Heart left ventricle (tissue), 16 donors: ENCODE measurements at regions of chr2 and their contacts with region 1.

Region 1: DNA sequence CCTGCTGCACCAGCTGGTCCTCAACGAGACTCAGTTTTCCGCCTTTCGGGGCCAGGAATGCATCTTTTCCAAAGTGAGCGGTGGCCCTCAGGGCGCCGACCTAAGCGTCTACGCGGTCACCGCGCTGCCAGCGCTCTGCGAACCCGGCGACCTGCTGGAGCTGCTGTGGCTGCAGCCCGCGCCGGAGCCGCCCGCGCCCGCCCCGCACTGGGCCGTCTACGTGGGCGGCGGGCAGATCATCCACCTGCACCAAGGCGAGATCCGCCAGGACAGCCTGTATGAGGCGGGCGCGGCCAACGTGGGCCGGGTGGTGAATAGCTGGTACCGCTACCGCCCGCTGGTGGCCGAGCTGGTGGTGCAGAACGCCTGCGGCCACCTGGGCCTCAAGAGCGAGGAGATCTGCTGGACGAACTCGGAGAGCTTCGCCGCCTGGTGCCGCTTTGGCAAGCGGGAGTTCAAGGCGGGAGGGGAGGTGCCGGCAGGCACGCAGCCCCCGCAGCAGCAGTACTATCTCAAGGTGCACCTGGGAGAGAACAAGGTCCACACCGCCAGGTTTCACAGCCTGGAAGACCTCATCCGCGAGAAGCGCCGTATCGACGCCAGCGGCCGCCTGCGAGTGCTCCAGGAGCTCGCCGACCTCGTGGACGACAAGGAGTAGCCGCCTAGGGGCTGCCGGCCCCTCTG is 1.8 kb downstream of the LRATD1 start:
- DNase-seq: peak; percentile 63 to 88 (median 79)
- ATAC-seq: peak; percentile 5 to 85 (median 74)
- H3K4me3 ChIP-seq: peak overlapping the region; percentile 24 to 64 (median 56)
- H3K27ac ChIP-seq: peak overlapping the region in 11 of 12 donors; percentile 43 to 90 (median 72)
- H3K4me1 ChIP-seq: peaks cover 0 to 40% (median 20%) of the 10 kb centered on the region in 12 donors
- H3K27me3 ChIP-seq: peaks cover 4 to 69% (median 28%) of the 10 kb centered on the region in 9 donors
- CTCF ChIP-seq: peak; percentile 35 to 80 (median 55)
- POLR2A ChIP-seq: no peak

Region 2: GRCh38 chr2:14428056-14428455 is 206.3 kb before region 1 on chr2:
- intact Hi-C with region 1: loop called in 1 of 10 experiments (anchors 2 kb)
- DNase-seq: peak in 2 of 5 donors; percentile 13 to 33
- ATAC-seq: peak in 3 of 4 donors; percentile 67 to 86 (median 82)
- H3K4me3 ChIP-seq: no peak overlapping the region
- H3K27ac ChIP-seq: no peak overlapping the region
- H3K4me1 ChIP-seq: no peaks in the 10 kb centered on the region
- H3K27me3 ChIP-seq: no peaks in the 10 kb centered on the region
- CTCF ChIP-seq: peak in 8 of 12 donors; percentile 9 to 41 (median 22)
- POLR2A ChIP-seq: no peak

Region 3: DNA sequence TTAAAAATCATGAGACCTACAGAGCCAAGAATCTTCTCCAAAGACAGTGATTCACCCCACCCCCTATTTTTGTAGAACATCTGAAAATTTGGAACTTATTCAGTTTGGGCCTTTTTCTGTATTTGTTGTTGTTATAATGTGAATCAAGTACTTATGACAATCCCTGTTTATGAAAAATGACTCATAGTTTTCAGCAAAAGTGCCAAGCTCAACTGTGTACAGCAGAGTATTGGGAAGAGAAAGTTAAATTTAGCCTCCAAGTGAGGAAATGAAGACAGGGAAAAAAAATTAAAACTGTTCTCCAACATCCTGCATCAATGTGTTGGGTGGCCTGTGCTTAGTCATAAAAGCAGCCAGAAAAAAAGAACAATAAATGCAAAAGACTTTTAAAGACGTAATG is 44.4 kb after region 1 on chr2:
- intact Hi-C with region 1: no loop called
- DNase-seq: no peak
- ATAC-seq: peak in 2 of 4 donors; percentile 22 to 43
- H3K4me3 ChIP-seq: no peak overlapping the region
- H3K27ac ChIP-seq: no peak overlapping the region
- H3K4me1 ChIP-seq: peaks cover 0 to 6% (median 0%) of the 10 kb centered on the region in 12 donors
- H3K27me3 ChIP-seq: no peaks in the 10 kb centered on the region
- CTCF ChIP-seq: no peak
- POLR2A ChIP-seq: no peak

Region 4: DNA sequence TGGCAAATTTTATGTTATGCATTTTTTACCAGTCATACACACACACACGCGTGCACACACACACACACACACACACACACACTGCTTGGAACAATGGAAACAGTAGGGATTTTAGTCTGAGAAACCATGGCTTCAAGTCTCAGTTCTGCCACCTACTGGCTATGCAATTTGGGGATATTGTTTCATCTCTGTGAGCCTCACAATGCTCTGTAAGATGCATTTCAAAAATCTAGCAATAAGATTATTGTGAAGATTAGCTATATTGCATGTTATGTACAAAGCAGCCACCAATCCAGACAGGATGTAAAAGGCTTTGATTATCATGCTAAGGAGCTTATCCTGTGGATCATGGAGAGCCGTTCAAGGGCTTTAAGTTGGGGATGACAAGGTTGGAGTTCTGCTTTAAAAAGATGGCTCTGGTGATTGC is 525.4 kb after region 1 on chr2:
- intact Hi-C with region 1: loop called in 1 of 10 experiments (anchors 10 kb)
- DNase-seq: no peak
- ATAC-seq: peak in 1 of 4 donors; percentile 31
- H3K4me3 ChIP-seq: no peak overlapping the region
- H3K27ac ChIP-seq: no peak overlapping the region
- H3K4me1 ChIP-seq: no peaks in the 10 kb centered on the region
- H3K27me3 ChIP-seq: no peaks in the 10 kb centered on the region
- CTCF ChIP-seq: peak in 11 of 12 donors; percentile 17 to 52 (median 36)
- POLR2A ChIP-seq: no peak

Region 5: DNA sequence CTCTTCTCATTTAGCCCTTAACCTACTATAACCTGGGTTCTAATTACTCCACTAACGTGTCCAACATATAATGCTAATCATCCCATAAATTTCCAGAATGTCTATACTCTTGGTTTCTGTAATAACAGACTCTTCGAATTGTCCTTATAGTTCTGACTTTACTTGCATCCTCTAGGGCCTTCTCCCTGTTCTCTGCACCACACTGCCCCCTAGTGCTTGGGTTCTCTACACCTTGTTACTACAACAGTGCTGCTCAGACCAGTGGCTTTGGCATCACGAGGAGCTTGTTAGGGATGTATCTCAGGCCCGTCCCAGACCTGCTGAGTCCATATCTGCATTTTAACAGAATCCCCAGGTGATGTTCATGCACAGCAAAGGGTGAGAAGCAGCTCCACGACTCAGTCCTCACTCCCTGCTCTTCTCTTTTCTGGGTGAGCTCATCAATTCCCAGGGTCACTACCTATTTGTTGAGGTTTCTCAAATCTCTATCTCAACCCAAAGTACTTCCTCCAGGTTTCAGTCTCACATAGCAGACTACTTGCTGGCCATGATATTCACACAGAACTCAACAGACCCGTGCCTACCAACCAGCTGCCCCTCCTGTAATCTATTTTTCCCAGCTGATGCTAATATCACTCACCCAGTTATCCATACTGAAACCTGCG is 942.9 kb after region 1 on chr2:
- intact Hi-C with region 1: loop called in 2 of 10 experiments (anchors 5 to 10 kb)
- DNase-seq: peak; percentile 76 to 87 (median 82)
- ATAC-seq: peak in 3 of 4 donors; percentile 90 to 94 (median 93)
- H3K4me3 ChIP-seq: no peak overlapping the region
- H3K27ac ChIP-seq: no peak overlapping the region
- H3K4me1 ChIP-seq: peaks cover 0 to 4% (median 0%) of the 10 kb centered on the region in 12 donors
- H3K27me3 ChIP-seq: no peaks in the 10 kb centered on the region
- CTCF ChIP-seq: peak; percentile 57 to 83 (median 72)
- POLR2A ChIP-seq: no peak